MCF 10A (cell line): ENCODE measurements at regions of chr17 and their contacts with region 1.

Region 1: DNA sequence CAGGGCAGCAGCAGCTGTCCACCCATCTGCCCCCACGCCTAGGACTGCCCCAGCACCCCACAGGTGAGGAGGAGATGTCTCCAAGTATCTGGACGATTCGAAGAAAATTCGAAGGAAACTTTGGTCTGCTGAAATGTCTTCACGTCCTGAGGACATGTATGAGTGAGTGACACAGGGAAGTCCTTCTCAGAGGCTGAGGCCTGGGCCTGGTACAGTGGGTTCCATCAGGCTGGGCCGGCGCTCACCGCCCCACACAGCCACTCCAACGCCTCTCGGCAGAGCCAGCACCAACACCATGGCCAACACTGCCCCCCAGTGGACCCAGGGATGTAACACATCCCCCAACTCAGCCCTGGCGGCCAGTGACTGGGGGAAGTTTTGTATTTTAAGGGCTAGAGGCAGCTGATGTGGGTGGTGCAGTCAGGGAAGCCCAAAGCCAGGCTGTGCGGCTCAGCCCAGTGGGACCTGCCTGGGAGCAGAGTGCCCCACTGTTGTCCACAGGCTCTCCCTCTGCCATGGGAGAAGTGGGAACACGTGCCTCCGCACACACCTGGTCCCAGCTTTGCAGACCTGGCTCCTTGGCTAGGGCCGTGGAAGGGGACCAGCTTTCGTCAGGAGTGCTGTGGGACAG is 55.8 kb upstream of the FASN start:
- DNase-seq: peak; percentile 78
- H3K4me3 Mint-ChIP-seq: no peak overlapping the region
- H3K27ac Mint-ChIP-seq: peak overlapping the region; percentile 27
- H3K4me1 Mint-ChIP-seq: no peaks in the 10 kb centered on the region
- H3K27me3 Mint-ChIP-seq: no peaks in the 10 kb centered on the region
- CTCF ChIP-seq: peak; percentile 96

Region 2: DNA sequence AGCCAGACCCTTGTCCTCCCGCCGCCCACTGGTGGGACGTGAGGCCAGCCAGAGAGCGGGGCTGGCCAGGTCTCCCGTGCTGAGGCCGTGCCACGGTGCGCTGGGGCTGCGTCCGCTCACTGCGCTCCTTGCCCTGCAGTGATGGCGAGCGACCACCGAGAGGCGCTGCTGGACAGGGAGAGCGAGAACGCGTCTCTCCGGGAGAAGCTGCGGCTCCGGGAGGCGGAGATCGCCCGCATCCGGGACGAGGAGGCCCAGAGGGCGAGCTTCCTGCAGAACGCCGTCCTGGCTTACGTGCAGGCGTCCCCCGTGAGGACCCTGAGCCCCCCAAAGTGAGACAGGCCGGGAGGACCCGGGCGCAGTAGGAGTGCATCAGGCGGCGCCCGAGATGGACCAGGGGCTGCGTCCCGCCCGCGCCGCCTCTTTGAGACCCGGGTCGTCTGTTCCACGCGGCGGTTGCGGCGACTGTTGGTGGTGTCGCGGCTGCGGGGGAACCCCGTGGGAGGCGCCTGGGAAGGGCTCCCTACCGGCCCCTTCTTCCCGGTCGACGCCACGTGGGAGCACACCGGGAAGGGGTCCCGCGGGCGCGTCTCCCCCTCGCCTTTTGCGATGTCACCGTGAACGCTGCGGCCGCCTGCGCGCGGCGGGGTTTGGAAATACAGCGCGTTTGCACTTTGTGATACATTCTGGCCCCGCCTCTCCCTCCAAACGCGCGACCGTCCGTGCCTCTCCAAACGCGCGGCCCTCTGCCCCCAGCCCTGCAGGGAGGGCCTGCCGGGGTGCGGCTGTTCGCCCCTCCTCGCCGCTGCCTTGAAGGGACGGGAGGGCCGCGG is 123.2 kb before region 1 on chr17:
- CTCF ChIA-PET with region 1: interaction called, 13 read pairs
- POLR2A ChIA-PET with region 1: interaction called, 4 read pairs
- intact Hi-C with region 1: loop called (anchors 2 kb)
- DNase-seq: peak; percentile 83
- H3K4me3 Mint-ChIP-seq: peak overlapping the region; percentile 78
- H3K27ac Mint-ChIP-seq: peak overlapping the region; percentile 35
- H3K4me1 Mint-ChIP-seq: no peaks in the 10 kb centered on the region
- H3K27me3 Mint-ChIP-seq: no peaks in the 10 kb centered on the region
- CTCF ChIP-seq: peak; percentile 98

Region 3: DNA sequence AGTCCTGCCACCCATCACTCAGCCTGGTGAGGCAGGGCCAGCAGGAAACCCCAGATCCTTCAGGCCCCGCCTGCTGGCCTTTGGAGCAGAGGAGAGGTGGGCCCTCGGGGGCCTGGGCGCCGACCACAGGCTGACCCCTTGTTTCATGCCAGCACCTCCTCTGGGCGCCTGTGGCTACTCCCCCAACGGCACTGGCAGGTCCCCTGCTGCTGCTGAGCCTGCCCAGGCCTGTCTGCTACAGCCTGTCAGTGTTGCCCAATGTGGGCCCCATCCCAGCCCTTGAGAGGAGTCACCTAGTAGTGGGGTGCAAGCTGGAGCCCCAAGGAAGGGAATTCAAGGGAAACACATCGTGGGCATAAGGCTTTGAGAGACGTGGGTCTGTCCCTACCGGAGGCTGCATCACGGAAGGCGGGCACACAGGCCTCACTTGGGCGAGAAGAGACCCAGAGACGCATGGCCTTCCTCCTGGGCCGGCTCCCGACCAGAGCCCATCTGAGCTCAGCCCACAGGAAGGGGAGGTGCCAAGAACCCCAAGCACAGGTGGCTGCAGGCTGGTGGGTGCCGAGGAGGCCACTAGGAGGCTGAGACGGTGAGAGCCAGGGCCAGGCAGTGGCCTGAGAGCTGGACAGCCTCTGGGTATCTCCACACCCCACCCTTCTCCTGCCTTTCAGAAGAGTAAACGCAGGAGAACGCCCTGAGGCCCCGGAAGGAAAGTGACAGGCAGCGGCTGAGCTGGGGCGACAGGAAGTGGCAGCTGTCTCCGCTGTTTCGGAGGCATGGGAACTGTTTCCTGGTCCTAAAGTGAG is 47.8 kb before region 1 on chr17:
- CTCF ChIA-PET with region 1: interaction called, 10 read pairs
- POLR2A ChIA-PET with region 1: interaction called, 5 read pairs
- intact Hi-C with region 1: loop called (anchors 1 kb)
- DNase-seq: peak; percentile 91
- H3K4me3 Mint-ChIP-seq: peak overlapping the region; percentile 75
- H3K27ac Mint-ChIP-seq: peak overlapping the region; percentile 86
- H3K4me1 Mint-ChIP-seq: peaks cover 17% of the 10 kb centered on the region
- H3K27me3 Mint-ChIP-seq: no peaks in the 10 kb centered on the region
- CTCF ChIP-seq: peak; percentile 28